ENCODE measurements at regions of chr19 and their contacts with region 1.

Region 1: DNA sequence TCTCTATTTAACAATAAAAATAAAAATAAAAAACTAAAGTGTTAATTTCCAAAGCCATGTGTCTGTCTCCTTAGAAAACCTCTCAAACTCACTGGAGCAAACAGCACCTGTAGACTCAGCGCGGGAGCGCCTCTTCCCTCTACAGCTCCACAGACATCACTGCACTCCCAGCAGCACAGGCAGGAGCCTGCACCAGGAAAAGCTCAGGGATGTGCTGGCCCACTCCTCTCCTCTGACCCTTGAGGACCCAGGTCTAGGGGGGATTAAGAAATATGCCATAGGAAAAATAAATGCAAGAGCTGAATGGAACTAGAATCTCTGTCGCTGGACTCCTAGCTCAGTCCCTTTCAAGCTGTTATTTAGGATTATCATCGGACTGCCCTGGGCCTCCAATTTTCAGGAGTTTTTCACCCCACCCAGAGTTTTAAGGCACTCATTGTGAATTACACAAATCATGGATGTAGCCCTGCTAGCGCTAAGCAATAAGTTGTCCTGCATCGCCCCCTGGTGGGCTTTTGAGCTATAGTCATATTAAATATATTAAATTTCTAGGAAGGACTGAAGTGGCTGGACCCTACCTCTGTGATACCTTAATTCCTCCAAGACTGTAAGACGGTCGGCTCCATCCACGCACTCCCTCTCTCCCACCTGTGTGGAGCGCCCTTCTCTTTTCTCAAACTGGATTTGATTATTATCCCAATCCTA is 333.9 kb downstream of the UQCRFS1 start:
- DNase-seq: peak; percentile 9
- H3K4me3 ChIP-seq: no peak overlapping the region
- H3K27me3 ChIP-seq: peaks cover 2% of the 10 kb centered on the region; the same call in 1 of the 2 replicates
- CTCF ChIP-seq: peak; percentile 57

Region 2: GRCh38 chr19:28727480-28728159 is 151.4 kb before region 1 on chr19:
- CTCF ChIA-PET with region 1: interaction called, 10 read pairs
- POLR2A ChIA-PET with region 1: no interaction called
- DNase-seq: no peak
- H3K4me3 ChIP-seq: peak overlapping the region; percentile 45
- H3K27me3 ChIP-seq: peaks cover 8% of the 10 kb centered on the region
- CTCF ChIP-seq: peak; percentile 58

Region 3: DNA sequence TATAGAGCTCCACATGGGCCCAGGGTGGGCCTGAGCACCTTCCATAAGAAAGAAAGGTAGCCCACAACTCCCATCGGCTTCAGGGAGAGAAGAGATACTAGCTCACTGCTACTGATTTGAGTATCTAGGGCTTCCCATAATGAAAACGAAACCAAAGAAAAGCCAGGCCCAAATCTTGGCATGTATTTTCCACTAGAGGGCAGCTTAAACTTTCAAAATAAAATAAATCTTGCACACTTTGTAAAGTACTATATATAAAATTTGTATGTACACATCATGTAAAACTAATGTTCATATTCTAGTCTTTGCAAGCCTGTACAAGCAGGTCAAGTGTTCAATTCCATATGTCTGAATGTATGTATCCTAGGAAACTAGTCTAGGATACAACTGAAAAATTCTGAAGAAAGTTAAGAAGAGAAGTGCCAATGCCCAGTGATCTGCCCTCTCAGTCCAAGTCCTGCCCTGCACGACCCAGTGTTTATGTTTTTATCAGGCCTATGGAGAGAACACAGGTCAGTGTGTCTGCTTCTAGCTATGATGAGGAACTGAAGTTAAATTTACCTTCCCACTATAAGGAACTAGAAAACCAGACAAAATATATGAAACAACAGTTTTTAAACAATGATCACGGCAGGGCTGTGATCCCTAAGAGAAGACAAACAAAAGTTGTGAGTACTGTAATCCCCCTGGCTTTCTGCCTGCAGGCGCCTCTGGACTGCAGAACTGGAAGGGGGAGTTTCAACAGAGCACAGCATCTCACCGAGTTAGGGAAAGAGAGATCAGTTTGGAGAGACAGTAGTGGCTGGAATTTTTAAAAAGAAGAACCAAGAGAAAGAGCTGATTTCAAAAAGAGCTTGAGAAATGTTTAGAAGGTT is 141.8 kb before region 1 on chr19:
- CTCF ChIA-PET with region 1: interaction called, 44 read pairs
- POLR2A ChIA-PET with region 1: no interaction called
- DNase-seq: peak; percentile 6
- H3K4me3 ChIP-seq: no peak overlapping the region
- H3K27me3 ChIP-seq: no peaks in the 10 kb centered on the region
- CTCF ChIP-seq: peak; percentile 68

Region 4: DNA sequence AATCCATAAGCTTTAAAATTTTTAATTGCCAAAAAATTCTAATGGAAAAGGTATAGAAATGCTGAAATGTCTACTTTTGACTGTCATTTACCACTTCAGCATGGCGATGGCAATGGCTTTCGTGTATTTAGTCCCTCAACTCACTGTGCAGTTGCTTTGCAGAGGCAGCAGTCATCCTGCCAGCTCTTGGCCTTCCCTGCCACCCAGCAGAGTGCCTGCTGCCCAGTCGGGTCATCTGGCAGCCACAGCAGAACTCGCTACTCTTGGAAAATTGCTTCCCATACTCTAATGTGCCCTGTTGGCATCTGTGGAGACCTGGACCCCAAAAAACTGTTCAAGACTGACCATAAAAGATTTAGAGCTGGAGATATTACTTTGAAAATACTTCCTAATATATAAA is 49.3 kb before region 1 on chr19:
- CTCF ChIA-PET with region 1: no interaction called
- POLR2A ChIA-PET with region 1: no interaction called
- DNase-seq: no peak
- H3K4me3 ChIP-seq: no peak overlapping the region
- H3K27me3 ChIP-seq: no peaks in the 10 kb centered on the region
- CTCF ChIP-seq: no peak

Measured in BJ (cell line).